ENCODE measurements at regions of chr12 and their contacts with region 1.

Region 1: DNA sequence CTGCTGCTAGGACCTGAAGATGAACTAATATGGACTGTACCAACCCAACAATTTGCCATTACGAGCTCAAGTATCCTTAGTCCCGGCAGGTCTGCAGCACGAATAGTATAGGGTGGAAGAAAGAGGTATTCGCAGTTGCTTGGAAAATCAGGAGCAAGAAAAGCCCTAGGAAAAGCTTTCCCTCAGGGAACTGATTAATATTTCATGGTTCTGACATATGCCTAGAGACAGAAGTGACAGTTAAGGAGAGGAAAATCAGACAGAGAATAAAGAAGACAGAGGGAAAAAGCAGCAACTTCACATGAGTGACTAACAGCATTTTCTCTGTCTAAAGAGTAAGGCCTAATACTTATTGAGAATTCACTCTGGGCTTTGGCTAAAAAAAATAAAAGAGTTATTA is 602.9 kb upstream of the ATP2B1 start:
- DNase-seq: no peak
- H3K4me3 ChIP-seq: no peak overlapping the region
- H3K27ac ChIP-seq: no peak overlapping the region
- H3K4me1 ChIP-seq: no peaks in the 10 kb centered on the region
- H3K27me3 ChIP-seq: no peaks in the 10 kb centered on the region
- CTCF ChIP-seq: no peak

Region 2: DNA sequence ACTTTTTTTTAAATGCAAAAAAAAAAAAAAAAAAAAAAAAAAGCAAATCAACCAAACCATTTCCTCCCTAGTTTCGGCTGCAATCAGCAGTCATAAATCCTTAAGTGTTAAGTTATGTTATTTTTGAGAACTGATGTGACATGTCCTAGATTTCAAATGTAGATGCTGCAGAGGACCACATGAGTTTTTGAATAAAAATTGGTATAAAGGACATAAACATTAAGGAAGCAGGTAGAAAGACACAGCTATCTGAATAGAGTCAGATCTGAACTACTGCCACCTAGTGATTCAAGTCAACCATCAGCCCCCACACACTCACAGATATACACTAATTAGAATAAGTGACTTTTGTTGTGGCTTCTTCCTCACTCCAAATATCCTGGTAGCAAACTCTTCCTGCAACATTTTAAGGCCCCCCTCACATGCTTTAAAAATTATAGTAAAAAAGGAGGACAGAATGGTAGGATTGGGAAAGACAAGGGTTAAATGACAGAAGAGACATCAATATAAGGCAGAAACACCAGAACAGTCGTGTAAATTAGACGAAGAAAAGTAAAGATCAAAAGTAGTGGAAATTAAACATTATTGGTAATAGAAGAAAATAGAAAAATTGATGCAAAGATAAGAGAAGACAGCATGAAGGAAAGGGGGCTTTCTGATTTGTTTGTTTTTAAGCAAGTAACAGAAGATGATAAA is 208.5 kb before region 1 on chr12:
- CTCF ChIA-PET with region 1: no interaction called
- POLR2A ChIA-PET with region 1: no interaction called
- intact Hi-C with region 1: no loop called
- DNase-seq: peak; percentile 7 to 40
- H3K4me3 ChIP-seq: no peak overlapping the region
- H3K27ac ChIP-seq: no peak overlapping the region
- H3K4me1 ChIP-seq: peaks cover 15% of the 10 kb centered on the region
- H3K27me3 ChIP-seq: no peaks in the 10 kb centered on the region
- CTCF ChIP-seq: peak; percentile 61

Region 3: GRCh38 chr12:90280564-90281058 is 30.9 kb before region 1 on chr12:
- CTCF ChIA-PET with region 1: no interaction called
- POLR2A ChIA-PET with region 1: interaction called, 12 read pairs
- intact Hi-C with region 1: no loop called
- DNase-seq: no peak
- H3K4me3 ChIP-seq: no peak overlapping the region
- H3K27ac ChIP-seq: no peak overlapping the region
- H3K4me1 ChIP-seq: no peaks in the 10 kb centered on the region
- H3K27me3 ChIP-seq: no peaks in the 10 kb centered on the region
- CTCF ChIP-seq: no peak